ENCODE measurements at regions of chr19 and their contacts with region 1.

Region 1: DNA sequence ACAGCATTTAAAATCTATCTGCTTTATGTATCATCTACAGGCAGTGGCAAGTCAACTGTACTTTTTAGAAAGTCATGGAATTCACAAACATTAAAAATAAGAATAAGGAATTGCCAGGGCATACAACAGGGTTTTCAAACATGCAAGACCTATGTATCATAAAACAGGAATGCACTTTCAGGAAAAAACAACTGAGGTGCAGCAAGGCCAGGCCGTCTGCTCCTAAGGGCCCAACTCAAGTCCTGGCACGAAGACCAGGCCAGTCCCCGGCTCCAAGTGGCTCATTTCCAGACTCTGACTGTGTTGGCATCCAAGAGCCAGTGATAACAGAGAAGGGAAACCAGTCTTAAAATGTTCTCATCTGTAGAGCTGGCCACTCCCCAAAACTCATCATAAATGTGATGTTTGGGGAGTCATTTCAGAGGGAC is 7.1 kb downstream of the RFX2 start:
- DNase-seq: peak; percentile 98
- H3K4me3 ChIP-seq: no peak overlapping the region
- H3K27ac ChIP-seq: peak overlapping the region; percentile 76
- H3K4me1 ChIP-seq: peaks cover 50% of the 10 kb centered on the region
- H3K27me3 ChIP-seq: no peaks in the 10 kb centered on the region
- CTCF ChIP-seq: no peak
- POLR2A ChIP-seq: peak; percentile 77

Region 2: DNA sequence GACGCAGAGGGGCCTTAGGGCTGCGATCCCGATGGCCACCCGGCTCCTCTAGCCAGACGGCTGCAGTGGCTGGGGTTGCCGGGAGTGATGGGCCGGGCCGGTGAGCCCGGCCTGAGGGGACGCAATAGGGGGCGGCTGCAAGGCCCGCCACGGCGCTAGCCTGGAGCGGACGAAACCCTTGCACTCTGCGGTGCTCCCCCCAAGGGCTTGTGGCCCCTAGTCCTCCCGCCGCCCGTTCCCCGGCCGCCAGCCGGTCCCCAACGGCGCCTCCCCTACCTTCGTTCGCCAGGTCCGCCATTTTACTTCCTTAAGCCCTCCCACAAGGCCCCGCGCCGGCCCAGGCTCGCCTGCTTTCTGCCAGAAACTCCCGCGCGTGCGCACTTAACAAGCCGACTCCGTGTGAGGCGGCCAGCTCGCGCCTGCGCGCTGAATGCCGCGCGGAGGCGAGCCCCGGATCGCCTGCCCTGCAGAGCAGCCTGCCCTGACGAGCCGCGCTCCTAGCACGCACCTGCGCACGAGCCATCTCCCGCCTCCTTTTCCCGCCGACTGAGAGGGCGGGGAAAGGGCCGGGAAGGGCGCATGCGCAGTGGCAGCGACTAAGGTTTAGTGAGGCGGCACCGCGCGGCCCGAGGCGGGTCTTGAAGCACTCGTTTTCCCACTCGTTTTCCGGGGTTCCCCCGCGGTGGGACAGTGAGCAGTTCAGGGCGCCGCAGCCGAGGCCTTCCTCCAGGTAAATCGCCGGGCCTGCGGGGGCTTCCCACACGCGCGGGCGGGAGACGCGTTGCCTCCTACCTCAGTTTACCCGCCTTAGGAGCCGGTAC is 125.2 kb before region 1 on chr19 and contains the start of gene RANBP3:
- CTCF ChIA-PET with region 1: no interaction called
- POLR2A ChIA-PET with region 1: no interaction called
- dilution Hi-C with region 1: no loop called
- intact Hi-C with region 1: loop called (anchors 5 kb)
- DNase-seq: peak; percentile 99
- H3K4me3 ChIP-seq: peak within 1 kb of the TSS; percentile 47 to 93 (median 91)
- H3K27ac ChIP-seq: peak within 1 kb of the TSS; percentile 71
- H3K4me1 ChIP-seq: peaks cover 17% of the 10 kb centered on the region
- H3K27me3 ChIP-seq: no peaks in the 10 kb centered on the region
- CTCF ChIP-seq: no peak
- POLR2A ChIP-seq: peak; percentile 66
- total RNA-seq, gene RANBP3: 72.3 and 87.8 TPM in 2 replicates

Region 3: GRCh38 chr19:6038634-6039405 is 64.4 kb before region 1 on chr19:
- CTCF ChIA-PET with region 1: no interaction called
- POLR2A ChIA-PET with region 1: no interaction called
- dilution Hi-C with region 1: no loop called
- intact Hi-C with region 1: no loop called
- DNase-seq: no peak
- H3K4me3 ChIP-seq: no peak overlapping the region
- H3K27ac ChIP-seq: no peak overlapping the region
- H3K4me1 ChIP-seq: no peaks in the 10 kb centered on the region
- H3K27me3 ChIP-seq: no peaks in the 10 kb centered on the region
- CTCF ChIP-seq: no peak
- POLR2A ChIP-seq: no peak

Region 4: DNA sequence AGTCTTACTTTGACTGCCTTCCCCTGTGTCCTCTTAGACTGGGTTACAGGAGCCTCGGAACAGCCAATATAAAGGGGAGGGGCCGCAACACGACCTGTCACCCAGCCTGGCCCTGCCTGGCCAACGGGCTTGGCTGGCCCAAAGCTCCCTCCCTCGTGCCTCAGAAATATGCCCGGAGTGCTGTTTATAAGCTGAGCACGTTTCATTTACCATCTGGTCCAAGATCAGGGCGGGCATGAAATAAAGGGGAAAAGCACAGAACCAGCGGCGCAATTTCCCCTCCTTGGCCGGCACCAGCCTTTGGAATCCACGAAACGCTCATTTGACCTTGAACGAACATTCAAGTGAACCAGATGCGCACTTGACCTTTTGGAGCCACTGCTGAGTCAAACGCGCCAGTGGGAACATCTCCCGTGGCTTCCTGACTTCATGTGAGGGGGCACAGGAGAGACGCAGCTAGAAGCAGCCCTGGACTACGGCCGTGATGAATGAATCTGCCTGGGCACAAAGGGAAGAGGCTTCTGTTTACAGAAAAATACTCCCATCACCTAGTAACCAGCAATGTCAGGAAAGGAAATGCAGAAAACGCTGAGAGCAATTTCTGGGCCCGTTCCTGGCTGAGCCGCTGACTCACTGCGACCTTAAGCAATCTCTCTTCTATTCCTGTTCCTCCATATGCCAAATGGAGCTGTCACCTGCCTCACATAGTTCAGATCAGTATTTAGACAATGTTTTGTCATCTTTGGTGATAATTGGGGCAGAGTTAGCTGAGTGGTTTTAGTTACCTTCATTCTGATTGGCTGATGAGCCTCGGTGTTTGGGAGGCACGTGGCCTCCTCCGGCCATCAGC is 46.2 kb before region 1 on chr19:
- CTCF ChIA-PET with region 1: interaction called, 13 read pairs
- POLR2A ChIA-PET with region 1: interaction called, 4 read pairs
- dilution Hi-C with region 1: no loop called
- intact Hi-C with region 1: loop called (anchors 1 kb)
- DNase-seq: peak; percentile 98
- H3K4me3 ChIP-seq: no peak overlapping the region
- H3K27ac ChIP-seq: peak overlapping the region; percentile 97
- H3K4me1 ChIP-seq: peaks cover 43% of the 10 kb centered on the region
- H3K27me3 ChIP-seq: no peaks in the 10 kb centered on the region
- CTCF ChIP-seq: no peak
- POLR2A ChIP-seq: no peak

Region 5: DNA sequence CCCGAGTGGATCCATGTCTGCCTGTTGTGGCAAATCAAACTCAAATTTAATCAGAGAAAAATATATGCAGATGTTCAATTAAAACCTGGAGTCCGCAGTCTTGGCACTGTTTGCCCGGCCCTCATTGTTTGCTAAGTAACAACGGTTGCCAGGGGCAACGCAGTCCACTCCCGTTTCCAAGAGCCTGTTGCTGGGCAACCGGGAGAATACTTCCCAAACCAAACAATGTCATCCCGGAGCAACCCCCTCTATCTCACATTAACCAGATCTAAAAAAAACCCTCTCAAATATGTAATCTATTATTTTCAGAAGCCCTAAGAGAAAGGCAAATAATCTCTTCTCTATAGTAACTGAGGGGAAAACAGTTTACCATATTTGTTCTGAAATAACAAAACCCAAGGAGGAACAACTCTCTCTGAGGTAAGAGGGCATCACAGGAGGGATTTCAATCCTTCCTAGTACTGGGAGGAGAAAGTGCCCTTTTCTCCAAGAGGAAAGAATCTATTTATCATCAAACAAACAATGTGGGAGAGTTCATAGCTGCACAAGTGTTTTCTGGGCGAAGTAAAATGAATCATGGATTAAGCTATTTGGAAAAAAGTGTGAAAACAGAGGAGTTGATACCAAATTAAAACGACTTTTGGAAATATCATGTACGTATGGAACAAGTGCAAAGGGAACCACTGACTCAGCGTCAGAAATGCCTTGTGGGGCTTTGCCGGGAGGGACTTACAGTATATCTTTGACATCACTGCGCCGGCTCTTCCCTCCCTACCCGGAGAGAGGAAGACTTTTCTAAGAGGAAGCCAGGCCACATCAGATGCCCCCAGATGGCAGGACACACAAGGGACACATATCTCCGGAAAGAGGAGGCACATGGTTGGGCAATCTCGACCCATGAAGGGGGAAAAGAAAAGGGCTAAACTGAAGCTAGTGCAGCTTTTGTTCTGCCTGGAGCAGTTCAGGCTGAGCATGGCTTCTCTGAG is 36.3 kb before region 1 on chr19:
- CTCF ChIA-PET with region 1: interaction called, 13 read pairs
- POLR2A ChIA-PET with region 1: interaction called, 4 read pairs
- dilution Hi-C with region 1: no loop called
- intact Hi-C with region 1: loop called (anchors 1 kb)
- DNase-seq: peak; percentile 99
- H3K4me3 ChIP-seq: no peak overlapping the region
- H3K27ac ChIP-seq: peak overlapping the region; percentile 100
- H3K4me1 ChIP-seq: peaks cover 54% of the 10 kb centered on the region
- H3K27me3 ChIP-seq: no peaks in the 10 kb centered on the region
- CTCF ChIP-seq: no peak
- POLR2A ChIP-seq: no peak

Region 6: DNA sequence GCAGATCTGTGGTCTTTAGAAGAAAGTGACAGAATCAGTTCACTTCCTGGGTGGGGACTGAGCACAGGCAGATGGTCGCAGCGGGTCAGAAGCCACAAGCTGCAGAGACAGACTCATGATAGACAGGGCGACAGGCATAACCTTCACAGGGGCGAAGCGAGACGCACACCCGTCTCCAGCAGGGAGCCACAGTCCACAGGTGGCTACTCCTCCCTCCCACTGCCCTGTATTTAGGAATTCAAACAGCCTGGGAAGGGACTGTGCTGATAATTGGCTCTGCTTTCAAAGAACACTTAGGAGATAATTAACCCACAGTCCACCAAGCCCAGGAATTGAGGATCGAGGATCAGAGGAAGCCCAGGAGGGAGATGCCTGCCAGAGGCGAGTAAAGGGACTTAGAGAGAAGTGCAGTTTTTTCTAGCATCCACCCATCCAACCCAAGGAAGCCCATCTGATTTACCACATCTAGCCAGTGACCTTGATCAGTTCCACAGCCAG is 16.1 kb before region 1 on chr19:
- CTCF ChIA-PET with region 1: interaction called, 14 read pairs
- POLR2A ChIA-PET with region 1: no interaction called
- dilution Hi-C with region 1: no loop called
- intact Hi-C with region 1: loop called (anchors 1 kb)
- DNase-seq: no peak
- H3K4me3 ChIP-seq: no peak overlapping the region
- H3K27ac ChIP-seq: peak overlapping the region; percentile 78
- H3K4me1 ChIP-seq: peaks cover 43% of the 10 kb centered on the region
- H3K27me3 ChIP-seq: no peaks in the 10 kb centered on the region
- CTCF ChIP-seq: no peak
- POLR2A ChIP-seq: no peak

Measured in endothelial cell of umbilical vein (primary cell).